Naive thymus-derived CD4-positive, alpha-beta T cell (primary cell): ENCODE measurements at regions of chr7 and their contacts with region 1.

Region 1: GRCh38 chr7:52302765-52303520 is 732.5 kb upstream of the POM121L12 start:
- DNase-seq: no peak
- ATAC-seq: no peak
- H3K4me3 ChIP-seq: no peak overlapping the region
- H3K4me3 Mint-ChIP-seq: peak overlapping the region in 1 of 10 donors; percentile 71
- H3K27ac ChIP-seq: no peak overlapping the region
- H3K27ac Mint-ChIP-seq: peak overlapping the region in 1 of 9 donors; percentile 69
- H3K4me1 ChIP-seq: no peaks in the 10 kb centered on the region
- H3K4me1 Mint-ChIP-seq: peaks cover 0 to 10% (median 0%) of the 10 kb centered on the region in 7 donors
- H3K27me3 ChIP-seq: no peaks in the 10 kb centered on the region
- H3K27me3 Mint-ChIP-seq: no peaks in the 10 kb centered on the region

Region 2: DNA sequence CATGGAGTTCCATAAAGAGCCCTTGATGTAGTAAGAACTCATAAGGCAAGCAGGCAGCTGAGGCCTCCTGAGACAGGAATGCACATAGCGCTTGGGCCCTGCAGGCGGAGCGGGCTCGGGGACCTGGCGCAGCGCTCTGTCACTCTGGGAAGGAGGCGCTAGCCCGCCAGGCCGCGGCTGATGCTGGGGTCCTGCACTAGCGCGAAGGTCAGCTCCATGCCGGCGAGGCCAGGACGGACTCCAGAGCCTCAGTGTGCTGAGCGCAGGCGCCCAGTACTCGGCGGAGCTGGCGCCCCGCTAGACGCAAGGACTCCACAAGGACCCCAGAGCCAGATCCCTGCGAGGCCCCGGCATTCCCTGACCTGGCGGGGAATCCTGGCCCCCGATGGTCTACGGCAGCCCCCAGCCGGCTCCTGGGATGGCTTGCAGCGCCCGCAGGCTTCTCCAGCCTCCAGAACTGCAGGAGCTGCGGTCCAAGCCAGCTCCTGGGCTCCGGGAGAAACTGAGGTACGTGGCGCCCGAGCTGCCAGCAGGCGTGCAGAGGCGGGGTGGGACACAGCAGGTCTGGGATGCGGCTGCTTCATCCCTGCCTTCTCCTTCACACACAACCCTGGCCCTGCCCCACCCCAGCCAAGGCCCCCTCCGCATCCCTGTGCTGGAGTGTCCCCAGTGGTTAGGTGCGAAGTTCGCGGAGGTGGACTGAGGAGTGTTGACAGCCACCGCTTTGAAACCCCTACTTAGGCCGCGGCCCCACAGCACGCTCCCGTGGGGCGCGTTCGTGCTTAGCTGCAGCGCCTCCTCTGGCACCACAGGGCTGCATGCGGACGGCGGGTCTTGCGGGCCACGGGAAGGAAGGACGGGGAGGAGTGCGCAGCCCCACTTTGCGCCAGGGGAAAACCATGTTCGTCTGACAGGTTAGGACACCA is 29.0 kb before region 1 on chr7:
- CTCF ChIA-PET with region 1: no interaction called
- POLR2A ChIA-PET with region 1: interaction called, 3 read pairs
- intact Hi-C with region 1: loop called in 1 of 2 experiments (anchors 1 kb)
- DNase-seq: peak in 3 of 9 donors; percentile 2 to 26 (median 17)
- ATAC-seq: no peak
- H3K4me3 ChIP-seq: no peak overlapping the region
- H3K4me3 Mint-ChIP-seq: peak overlapping the region in 5 of 10 donors; percentile 12 to 75 (median 69)
- H3K27ac ChIP-seq: no peak overlapping the region
- H3K27ac Mint-ChIP-seq: peak overlapping the region in 2 of 9 donors; percentile 80 to 90
- H3K4me1 ChIP-seq: no peaks in the 10 kb centered on the region
- H3K4me1 Mint-ChIP-seq: peaks cover 0 to 5% (median 0%) of the 10 kb centered on the region in 7 donors
- H3K27me3 ChIP-seq: no peaks in the 10 kb centered on the region
- H3K27me3 Mint-ChIP-seq: no peaks in the 10 kb centered on the region